Cardiac septum (tissue), 1 donor: ENCODE measurements at regions of chr3 and their contacts with region 1.

Region 1: GRCh38 chr3:193865339-193865738 is 270.6 kb upstream of the HES1 start:
- DNase-seq: no peak

Region 2: GRCh38 chr3:193831495-193832455 is 33.6 kb before region 1 on chr3:
- intact Hi-C with region 1: loop called (anchors 2 kb)
- DNase-seq: no peak

Region 3: GRCh38 chr3:194003125-194004057 is 138.1 kb after region 1 on chr3:
- intact Hi-C with region 1: loop called (anchors 5 kb)
- DNase-seq: peak; percentile 94